ENCODE measurements at regions of chr15 and their contacts with region 1.

Region 1: GRCh38 chr15:26061248-26061647 is 198.1 kb upstream of the ATP10A start:
- DNase-seq: no peak
- H3K4me3 ChIP-seq: no peak overlapping the region
- H3K4me3 Mint-ChIP-seq: no peak overlapping the region
- H3K27ac ChIP-seq: no peak overlapping the region
- H3K27ac Mint-ChIP-seq: no peak overlapping the region
- H3K4me1 ChIP-seq: no peaks in the 10 kb centered on the region
- H3K4me1 Mint-ChIP-seq: no peaks in the 10 kb centered on the region
- H3K27me3 ChIP-seq: no peaks in the 10 kb centered on the region
- H3K27me3 Mint-ChIP-seq: peaks cover 10 to 14% of the 10 kb centered on the region in 2 donors

Region 2: GRCh38 chr15:26113296-26113695 is 52.0 kb after region 1 on chr15:
- CTCF ChIA-PET with region 1: no interaction called
- POLR2A ChIA-PET with region 1: no interaction called
- intact Hi-C with region 1: loop called (anchors 5 kb)
- DNase-seq: no peak
- H3K4me3 ChIP-seq: no peak overlapping the region
- H3K4me3 Mint-ChIP-seq: no peak overlapping the region
- H3K27ac ChIP-seq: no peak overlapping the region
- H3K27ac Mint-ChIP-seq: no peak overlapping the region
- H3K4me1 ChIP-seq: no peaks in the 10 kb centered on the region
- H3K4me1 Mint-ChIP-seq: no peaks in the 10 kb centered on the region
- H3K27me3 ChIP-seq: no peaks in the 10 kb centered on the region
- H3K27me3 Mint-ChIP-seq: peaks cover 0 to 4% of the 10 kb centered on the region in 2 donors

Region 3: GRCh38 chr15:26996250-26996649 is 935.0 kb after region 1 on chr15:
- CTCF ChIA-PET with region 1: no interaction called
- POLR2A ChIA-PET with region 1: no interaction called
- intact Hi-C with region 1: no loop called
- DNase-seq: no peak
- H3K4me3 ChIP-seq: no peak overlapping the region
- H3K4me3 Mint-ChIP-seq: no peak overlapping the region
- H3K27ac ChIP-seq: no peak overlapping the region
- H3K27ac Mint-ChIP-seq: no peak overlapping the region
- H3K4me1 ChIP-seq: no peaks in the 10 kb centered on the region
- H3K4me1 Mint-ChIP-seq: no peaks in the 10 kb centered on the region
- H3K27me3 ChIP-seq: no peaks in the 10 kb centered on the region
- H3K27me3 Mint-ChIP-seq: no peaks in the 10 kb centered on the region